HCT116 (cell line): ENCODE measurements at regions of chrX and their contacts with region 1.

Region 1: DNA sequence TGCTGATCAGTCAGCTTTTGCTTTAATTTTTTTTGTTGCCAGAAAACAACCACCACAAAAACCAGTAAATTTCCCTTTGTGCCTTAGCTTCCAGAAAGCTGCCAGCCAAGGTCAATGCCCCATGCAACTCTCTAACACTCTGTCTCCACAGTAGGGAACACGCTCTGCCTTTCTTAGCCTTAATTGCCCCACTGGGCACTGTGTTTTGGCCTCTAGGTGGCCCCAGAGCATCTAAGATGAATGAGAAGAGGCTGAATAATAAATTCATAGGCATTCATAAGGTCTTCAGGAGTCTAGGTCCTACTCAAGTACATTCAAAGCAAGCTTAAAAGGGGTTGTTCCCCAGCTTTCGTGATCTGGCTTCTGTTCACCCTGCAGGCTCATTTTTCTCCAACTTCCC is 57.7 kb upstream of the PASD1 start:
- DNase-seq: peak; percentile 8
- ATAC-seq: peak; percentile 76
- H3K4me3 ChIP-seq: no peak overlapping the region
- H3K27ac ChIP-seq: no peak overlapping the region
- H3K4me1 ChIP-seq: no peaks in the 10 kb centered on the region
- H3K27me3 ChIP-seq: peaks cover 9% of the 10 kb centered on the region; the same call in 1 of the 2 replicates
- CTCF ChIP-seq: peak; percentile 42 to 53 (median 51); a peak in 5 of 6 replicates
- POLR2A ChIP-seq: no peak
- RAD21 ChIP-seq: peak; percentile 62

Region 2: DNA sequence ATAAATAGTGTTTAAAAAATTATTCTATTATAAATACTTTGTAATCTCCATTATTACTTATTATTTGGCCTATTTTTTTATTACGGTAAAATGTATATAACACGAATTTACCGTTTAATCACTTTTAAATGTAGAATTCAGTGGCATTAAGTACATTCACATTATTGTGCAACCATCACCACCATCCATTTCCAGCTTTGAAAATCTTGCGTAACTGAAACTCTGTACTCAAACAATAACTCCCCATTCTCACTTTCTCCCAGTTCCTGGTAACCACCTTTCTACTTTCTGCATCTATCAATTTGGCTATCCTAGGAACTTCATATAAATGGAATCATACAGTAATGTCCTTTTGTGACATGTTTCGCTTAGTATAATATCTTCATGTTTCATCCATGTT is 103.4 kb after region 1 on chrX:
- CTCF ChIA-PET with region 1: no interaction called
- POLR2A ChIA-PET with region 1: no interaction called
- RAD21 ChIA-PET with region 1: no interaction called
- intact Hi-C with region 1: loop called (anchors 5 kb)
- DNase-seq: no peak
- ATAC-seq: no peak
- H3K4me3 ChIP-seq: no peak overlapping the region
- H3K27ac ChIP-seq: no peak overlapping the region
- H3K4me1 ChIP-seq: no peaks in the 10 kb centered on the region
- H3K27me3 ChIP-seq: peaks cover 2% of the 10 kb centered on the region; the same call in 1 of the 2 replicates
- CTCF ChIP-seq: no peak
- POLR2A ChIP-seq: no peak
- RAD21 ChIP-seq: no peak

Region 3: DNA sequence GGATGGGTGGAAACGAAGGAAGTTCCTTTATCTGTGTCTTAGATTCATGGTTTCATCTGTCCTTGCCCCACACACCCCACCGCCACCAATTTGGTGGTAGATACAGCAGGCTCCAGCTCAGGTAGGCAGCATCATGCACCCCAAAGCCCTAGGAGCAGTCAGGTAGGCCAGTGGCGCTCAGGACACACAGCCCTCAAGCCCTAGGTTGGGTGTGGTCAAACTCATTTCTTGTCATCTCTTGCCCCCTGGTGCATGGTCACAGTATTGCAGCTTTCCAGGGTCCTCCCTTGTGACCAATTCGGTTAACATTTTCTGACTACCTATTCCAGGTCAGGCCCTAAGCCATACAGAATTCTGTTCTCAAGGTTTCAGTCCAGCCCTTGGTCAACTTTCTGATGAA is 175.0 kb after region 1 on chrX:
- CTCF ChIA-PET with region 1: interaction called, 4 read pairs
- POLR2A ChIA-PET with region 1: no interaction called
- RAD21 ChIA-PET with region 1: no interaction called
- intact Hi-C with region 1: loop called (anchors 2 kb)
- DNase-seq: peak; percentile 32
- ATAC-seq: peak; percentile 86
- H3K4me3 ChIP-seq: no peak overlapping the region
- H3K27ac ChIP-seq: no peak overlapping the region
- H3K4me1 ChIP-seq: no peaks in the 10 kb centered on the region
- H3K27me3 ChIP-seq: peaks cover 5% of the 10 kb centered on the region; the same call in 1 of the 2 replicates
- CTCF ChIP-seq: peak; percentile 48 to 56 (median 54)
- POLR2A ChIP-seq: no peak
- RAD21 ChIP-seq: peak; percentile 77

Region 4: GRCh38 chrX:151722241-151722846 is 216.5 kb after region 1 on chrX:
- CTCF ChIA-PET with region 1: no interaction called
- POLR2A ChIA-PET with region 1: no interaction called
- RAD21 ChIA-PET with region 1: no interaction called
- intact Hi-C with region 1: loop called (anchors 1 kb)
- DNase-seq: peak; percentile 2
- ATAC-seq: peak; percentile 99
- H3K4me3 ChIP-seq: no peak overlapping the region
- H3K27ac ChIP-seq: no peak overlapping the region
- H3K4me1 ChIP-seq: no peaks in the 10 kb centered on the region
- H3K27me3 ChIP-seq: no peaks in the 10 kb centered on the region
- CTCF ChIP-seq: peak; percentile 25 to 54 (median 48); a peak in 5 of 6 replicates
- POLR2A ChIP-seq: no peak
- RAD21 ChIP-seq: peak; percentile 41